CD8-positive, alpha-beta memory T cell (primary cell): ENCODE measurements at regions of chr2 and their contacts with region 1.

Region 1: GRCh38 chr2:26605195-26605998 is 35.8 kb downstream of the CIB4 start:
- DNase-seq: peak in 2 of 5 donors; percentile 11 to 37
- H3K4me3 ChIP-seq: no peak overlapping the region
- H3K4me3 Mint-ChIP-seq: no peak overlapping the region
- H3K27ac ChIP-seq: no peak overlapping the region
- H3K27ac Mint-ChIP-seq: no peak overlapping the region
- H3K4me1 ChIP-seq: peaks cover 15% of the 10 kb centered on the region
- H3K4me1 Mint-ChIP-seq: peaks cover 0 to 10% (median 9%) of the 10 kb centered on the region in 3 donors
- H3K27me3 ChIP-seq: no peaks in the 10 kb centered on the region
- H3K27me3 Mint-ChIP-seq: peaks cover 17 to 44% of the 10 kb centered on the region in 2 donors

Region 2: DNA sequence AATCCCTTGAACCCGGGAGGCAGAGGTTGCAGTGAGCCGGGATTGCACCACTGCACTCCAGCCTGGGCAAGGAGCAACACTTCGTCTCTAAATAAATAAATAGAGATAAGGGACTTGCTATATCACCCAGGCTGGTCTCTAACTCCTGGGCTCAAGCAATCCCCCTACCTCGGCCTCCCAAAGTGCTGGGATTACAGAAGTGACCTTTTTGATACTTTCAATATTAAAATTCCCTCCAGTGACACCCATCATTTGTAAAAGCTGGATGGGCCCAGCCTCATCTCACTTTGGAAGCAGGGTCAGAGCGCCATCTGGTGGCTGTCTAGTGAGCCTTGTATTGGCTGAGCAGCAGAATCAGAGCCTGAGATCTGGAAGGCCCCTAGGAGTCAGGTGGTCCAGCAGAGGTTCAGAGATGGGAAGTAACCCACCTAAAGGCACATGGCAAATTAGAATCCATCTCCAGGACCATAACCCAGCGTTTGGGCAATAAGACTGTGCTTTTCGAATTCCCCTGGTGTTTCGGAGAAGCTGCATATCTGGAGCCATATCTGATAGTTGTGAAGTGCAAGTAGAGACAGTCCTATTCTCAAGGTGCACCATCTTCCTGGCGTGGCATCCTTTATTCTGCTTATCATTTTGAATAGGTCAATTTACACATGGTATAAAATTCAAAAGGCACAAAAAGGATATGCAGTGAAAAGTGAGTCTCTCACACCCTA is 140.4 kb after region 1 on chr2:
- CTCF ChIA-PET with region 1: interaction called, 11 read pairs
- POLR2A ChIA-PET with region 1: no interaction called
- DNase-seq: peak; percentile 47 to 81 (median 64)
- H3K4me3 ChIP-seq: no peak overlapping the region
- H3K4me3 Mint-ChIP-seq: no peak overlapping the region
- H3K27ac ChIP-seq: no peak overlapping the region
- H3K27ac Mint-ChIP-seq: peak overlapping the region in 1 of 8 donors; percentile 55
- H3K4me1 ChIP-seq: no peaks in the 10 kb centered on the region
- H3K4me1 Mint-ChIP-seq: peaks cover 5 to 7% (median 6%) of the 10 kb centered on the region in 3 donors
- H3K27me3 ChIP-seq: no peaks in the 10 kb centered on the region
- H3K27me3 Mint-ChIP-seq: peaks cover 0 to 1% of the 10 kb centered on the region in 2 donors